ENCODE measurements at regions of chr2 and their contacts with region 1.

Region 1: GRCh38 chr2:174023591-174024523 is 58.7 kb upstream of the SP3 start:
- DNase-seq: peak; percentile 71
- ATAC-seq: peak; percentile 86
- H3K4me3 Mint-ChIP-seq: no peak overlapping the region
- H3K27ac Mint-ChIP-seq: peak overlapping the region; percentile 5
- H3K4me1 Mint-ChIP-seq: peaks cover 16% of the 10 kb centered on the region
- H3K27me3 Mint-ChIP-seq: no peaks in the 10 kb centered on the region

Region 2: DNA sequence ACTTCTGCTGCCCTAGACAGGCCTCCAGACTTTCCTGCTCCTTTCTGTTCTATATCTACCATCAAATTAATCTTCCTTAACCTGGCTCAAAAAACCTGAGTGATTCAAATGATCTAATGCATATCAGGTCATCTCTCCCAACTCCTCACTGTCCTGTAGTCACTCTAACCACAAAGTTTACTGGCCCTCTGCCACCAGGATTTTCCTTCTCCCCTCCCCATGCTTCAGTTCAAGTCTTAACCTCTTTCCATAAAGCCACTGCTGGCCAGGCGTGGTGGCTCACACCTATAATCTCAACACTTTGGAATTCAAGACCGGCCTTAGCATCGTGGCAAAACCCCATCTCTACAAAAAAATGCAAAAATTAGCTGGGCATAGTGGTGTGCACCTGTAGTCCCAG is 51.3 kb before region 1 on chr2:
- CTCF ChIA-PET with region 1: no interaction called
- POLR2A ChIA-PET with region 1: no interaction called
- intact Hi-C with region 1: loop called in 1 of 2 experiments (anchors 1 kb)
- DNase-seq: no peak
- ATAC-seq: no peak
- H3K4me3 Mint-ChIP-seq: no peak overlapping the region
- H3K27ac Mint-ChIP-seq: no peak overlapping the region
- H3K4me1 Mint-ChIP-seq: peaks cover 17% of the 10 kb centered on the region
- H3K27me3 Mint-ChIP-seq: peaks cover 3% of the 10 kb centered on the region

Region 3: GRCh38 chr2:174004905-174005605 is 18.8 kb before region 1 on chr2:
- CTCF ChIA-PET with region 1: no interaction called
- POLR2A ChIA-PET with region 1: no interaction called
- intact Hi-C with region 1: loop called in 1 of 2 experiments (anchors 1 kb)
- DNase-seq: peak; percentile 49
- ATAC-seq: peak; percentile 98
- H3K4me3 Mint-ChIP-seq: no peak overlapping the region
- H3K27ac Mint-ChIP-seq: no peak overlapping the region
- H3K4me1 Mint-ChIP-seq: peaks cover 8% of the 10 kb centered on the region
- H3K27me3 Mint-ChIP-seq: peaks cover 4% of the 10 kb centered on the region

Region 4: DNA sequence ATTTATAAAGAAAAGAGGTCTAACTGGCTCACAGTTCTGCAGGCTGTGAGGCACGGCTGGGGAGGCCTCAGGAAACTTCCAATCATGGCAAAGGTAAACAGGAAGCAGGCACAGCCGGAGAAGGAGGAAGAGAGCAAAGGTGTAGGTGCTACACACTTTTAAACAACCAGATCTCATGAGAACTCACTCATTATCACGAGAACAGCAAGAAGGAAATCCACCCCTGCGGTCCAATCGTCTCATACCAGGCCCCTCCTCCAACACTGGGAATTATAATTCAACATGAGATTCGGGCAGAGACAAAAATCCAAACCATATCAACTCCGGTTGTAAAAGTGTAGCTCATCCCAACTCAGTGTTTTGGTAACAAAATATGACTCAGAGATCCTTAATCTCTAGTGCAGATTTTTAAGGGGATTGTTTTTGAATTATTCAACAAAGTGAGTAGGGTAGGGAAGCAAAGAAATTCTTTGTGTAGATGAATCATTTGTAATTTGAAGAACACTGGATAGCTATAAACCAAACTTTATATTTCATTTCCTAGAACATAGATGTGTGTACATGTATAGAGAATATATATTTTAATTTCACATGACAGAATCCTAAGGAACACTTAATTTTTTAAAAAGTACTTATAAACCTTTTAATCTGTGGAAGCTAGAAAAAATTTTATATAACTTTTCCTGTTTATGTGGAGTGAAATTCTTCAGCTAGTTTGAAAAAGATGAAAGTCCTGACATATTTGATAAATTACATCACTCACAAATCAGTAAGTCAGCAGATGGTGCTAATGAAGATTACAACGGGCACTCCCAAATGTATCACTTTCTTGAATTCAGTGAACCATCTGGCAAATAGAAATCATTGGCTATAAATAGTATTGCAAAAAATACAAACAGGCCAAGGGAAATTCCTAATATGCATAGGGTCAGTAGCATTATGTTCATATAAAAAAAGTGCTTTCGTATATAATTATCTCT is 94.4 kb after region 1 on chr2:
- CTCF ChIA-PET with region 1: no interaction called
- POLR2A ChIA-PET with region 1: no interaction called
- intact Hi-C with region 1: no loop called
- DNase-seq: no peak
- ATAC-seq: no peak
- H3K4me3 Mint-ChIP-seq: no peak overlapping the region
- H3K27ac Mint-ChIP-seq: no peak overlapping the region
- H3K4me1 Mint-ChIP-seq: peaks cover 7% of the 10 kb centered on the region
- H3K27me3 Mint-ChIP-seq: no peaks in the 10 kb centered on the region